ENCODE measurements at regions of chr1 and their contacts with region 1.

Region 1: GRCh38 chr1:63575340-63575826 is 17.8 kb upstream of the PGM1 start:
- DNase-seq: no peak
- H3K4me3 Mint-ChIP-seq: no peak overlapping the region
- H3K27ac Mint-ChIP-seq: no peak overlapping the region
- H3K4me1 Mint-ChIP-seq: no peaks in the 10 kb centered on the region
- H3K27me3 Mint-ChIP-seq: no peaks in the 10 kb centered on the region

Region 2: DNA sequence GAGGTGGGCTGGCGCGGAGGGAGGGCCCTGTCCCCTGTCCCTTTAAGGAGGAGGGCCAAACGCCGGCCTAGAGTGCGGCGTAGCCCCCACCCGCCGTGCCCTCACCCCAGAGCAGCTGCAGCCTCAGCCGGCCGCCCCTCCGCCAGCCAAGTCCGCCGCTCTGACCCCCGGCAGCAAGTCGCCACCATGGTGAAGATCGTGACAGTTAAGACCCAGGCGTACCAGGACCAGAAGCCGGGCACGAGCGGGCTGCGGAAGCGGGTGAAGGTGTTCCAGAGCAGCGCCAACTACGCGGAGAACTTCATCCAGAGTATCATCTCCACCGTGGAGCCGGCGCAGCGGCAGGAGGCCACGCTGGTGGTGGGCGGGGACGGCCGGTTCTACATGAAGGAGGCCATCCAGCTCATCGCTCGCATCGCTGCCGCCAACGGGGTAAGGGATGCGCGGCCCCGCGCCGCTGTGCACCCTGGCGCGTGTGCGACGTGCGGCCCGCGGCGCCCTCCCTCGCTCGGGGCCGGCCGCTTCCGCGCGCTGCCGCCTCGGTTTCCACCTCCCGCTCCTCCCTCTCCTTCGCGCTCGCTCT is 18.0 kb after region 1 on chr1 and contains the start of gene PGM1:
- CTCF ChIA-PET with region 1: interaction called, 7 read pairs
- POLR2A ChIA-PET with region 1: no interaction called
- intact Hi-C with region 1: loop called (anchors 2 kb)
- DNase-seq: peak; percentile 84
- H3K4me3 Mint-ChIP-seq: peak within 1 kb of the TSS; percentile 95
- H3K27ac Mint-ChIP-seq: peak within 1 kb of the TSS; percentile 98
- H3K4me1 Mint-ChIP-seq: peaks cover 28% of the 10 kb centered on the region
- H3K27me3 Mint-ChIP-seq: no peaks in the 10 kb centered on the region
- total RNA-seq, gene PGM1: 31.9 to 32.4 TPM